ENCODE measurements at regions of chr15 and their contacts with region 1.

Region 1: GRCh38 chr15:52208306-52208946 is 17.2 kb upstream of the GNB5 start:
- DNase-seq: peak; percentile 65
- CTCF ChIP-seq: peak; percentile 77

Region 2: GRCh38 chr15:52154896-52155865 is 53.2 kb before region 1 on chr15:
- CTCF ChIA-PET with region 1: interaction called, 14 read pairs
- POLR2A ChIA-PET with region 1: no interaction called
- DNase-seq: no peak
- CTCF ChIP-seq: no peak

Region 3: DNA sequence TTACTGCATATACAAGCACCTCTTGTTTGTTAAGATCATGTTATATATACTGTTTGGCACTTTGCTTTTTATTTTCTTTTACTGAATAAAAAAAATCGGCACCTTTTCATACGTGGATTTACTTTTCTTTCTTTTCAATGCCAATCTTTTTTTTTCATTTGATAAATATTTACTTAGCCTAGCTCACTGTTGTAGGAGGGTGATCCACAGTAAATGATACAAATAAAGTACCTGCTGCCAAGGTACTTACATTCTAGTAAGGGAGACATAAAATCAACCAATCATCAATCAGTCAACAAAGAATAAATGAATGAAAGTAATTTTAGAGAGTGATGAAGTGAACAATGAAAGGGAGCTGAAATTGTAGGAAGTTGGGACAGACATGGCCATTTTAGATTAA is 35.6 kb before region 1 on chr15:
- CTCF ChIA-PET with region 1: interaction called, 20 read pairs
- POLR2A ChIA-PET with region 1: no interaction called
- DNase-seq: no peak
- CTCF ChIP-seq: no peak

Region 4: DNA sequence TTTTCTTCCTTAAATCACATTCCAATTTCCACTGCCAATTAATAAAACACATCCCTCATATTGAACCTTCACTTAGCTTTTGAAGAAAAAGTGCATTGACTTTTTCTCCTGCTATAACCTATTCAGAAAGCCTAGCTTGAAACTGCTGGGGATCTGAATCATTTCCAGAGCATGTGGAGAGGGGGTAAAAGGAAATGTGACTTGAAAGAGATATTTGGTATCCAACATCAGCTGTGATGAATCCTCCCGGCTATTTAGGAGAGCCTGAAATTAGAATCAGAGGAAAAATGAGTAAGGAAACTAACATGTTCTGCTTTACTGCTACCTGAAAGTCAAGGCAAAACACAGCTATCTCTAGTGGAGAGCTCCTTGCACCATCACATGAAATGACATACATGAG is 14.6 kb before region 1 on chr15:
- CTCF ChIA-PET with region 1: interaction called, 19 read pairs
- POLR2A ChIA-PET with region 1: no interaction called
- DNase-seq: no peak
- CTCF ChIP-seq: no peak

Region 5: GRCh38 chr15:52496776-52497470 is 288.5 kb after region 1 on chr15:
- CTCF ChIA-PET with region 1: no interaction called
- POLR2A ChIA-PET with region 1: no interaction called
- DNase-seq: no peak
- CTCF ChIP-seq: no peak